Mammary epithelial cell (primary cell): ENCODE measurements at regions of chr3 and their contacts with region 1.

Region 1: GRCh38 chr3:115523458-115523857 is 99.9 kb upstream of the GAP43 start:
- DNase-seq: no peak
- H3K4me3 ChIP-seq: no peak overlapping the region
- H3K27ac ChIP-seq: no peak overlapping the region
- H3K4me1 ChIP-seq: peaks cover 6% of the 10 kb centered on the region
- H3K27me3 ChIP-seq: no peaks in the 10 kb centered on the region
- CTCF ChIP-seq: no peak

Region 2: DNA sequence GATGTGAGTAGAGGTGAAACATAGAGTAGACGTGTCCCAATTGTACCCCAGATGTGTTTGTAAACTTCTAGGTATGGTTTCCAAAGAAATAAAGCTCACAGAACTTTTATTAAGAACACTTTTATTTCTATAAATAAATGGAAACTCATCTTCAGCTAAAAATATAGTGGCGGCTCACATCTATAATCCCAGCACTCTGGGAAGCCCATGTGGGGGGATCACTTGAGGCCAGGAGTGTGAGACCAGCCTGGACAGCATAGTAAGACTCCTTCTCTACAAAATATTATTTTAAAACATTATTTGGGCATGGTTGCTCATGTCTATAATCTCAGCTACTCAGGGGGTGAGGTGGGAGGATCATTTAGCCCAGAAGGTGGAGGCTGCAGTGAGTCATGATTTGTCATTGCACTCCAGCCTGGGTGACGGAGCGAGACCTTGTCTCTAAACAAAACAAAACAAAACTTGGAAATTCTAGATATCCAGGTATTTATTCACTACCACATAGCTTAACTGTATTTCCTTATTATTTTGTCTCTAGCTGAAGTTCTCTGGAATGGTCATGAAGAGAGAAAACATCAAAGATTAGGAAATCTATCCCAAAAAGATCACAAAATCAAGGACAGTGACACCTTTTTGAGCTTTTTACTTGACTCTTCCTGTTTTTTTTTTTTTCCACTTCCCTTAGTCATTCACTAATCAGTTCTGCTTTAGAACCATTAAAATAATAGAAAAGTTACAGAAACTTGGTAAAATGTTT is 971.5 kb before region 1 on chr3:
- CTCF ChIA-PET with region 1: interaction called, 31 read pairs
- dilution Hi-C with region 1: no loop called
- in situ Hi-C with region 1: no loop called
- intact Hi-C with region 1: no loop called
- DNase-seq: peak; percentile 88
- H3K4me3 ChIP-seq: no peak overlapping the region
- H3K27ac ChIP-seq: peak overlapping the region; percentile 89
- H3K4me1 ChIP-seq: peaks cover 11% of the 10 kb centered on the region
- H3K27me3 ChIP-seq: no peaks in the 10 kb centered on the region
- CTCF ChIP-seq: no peak